ENCODE measurements at regions of chr2 and their contacts with region 1.

Region 1: DNA sequence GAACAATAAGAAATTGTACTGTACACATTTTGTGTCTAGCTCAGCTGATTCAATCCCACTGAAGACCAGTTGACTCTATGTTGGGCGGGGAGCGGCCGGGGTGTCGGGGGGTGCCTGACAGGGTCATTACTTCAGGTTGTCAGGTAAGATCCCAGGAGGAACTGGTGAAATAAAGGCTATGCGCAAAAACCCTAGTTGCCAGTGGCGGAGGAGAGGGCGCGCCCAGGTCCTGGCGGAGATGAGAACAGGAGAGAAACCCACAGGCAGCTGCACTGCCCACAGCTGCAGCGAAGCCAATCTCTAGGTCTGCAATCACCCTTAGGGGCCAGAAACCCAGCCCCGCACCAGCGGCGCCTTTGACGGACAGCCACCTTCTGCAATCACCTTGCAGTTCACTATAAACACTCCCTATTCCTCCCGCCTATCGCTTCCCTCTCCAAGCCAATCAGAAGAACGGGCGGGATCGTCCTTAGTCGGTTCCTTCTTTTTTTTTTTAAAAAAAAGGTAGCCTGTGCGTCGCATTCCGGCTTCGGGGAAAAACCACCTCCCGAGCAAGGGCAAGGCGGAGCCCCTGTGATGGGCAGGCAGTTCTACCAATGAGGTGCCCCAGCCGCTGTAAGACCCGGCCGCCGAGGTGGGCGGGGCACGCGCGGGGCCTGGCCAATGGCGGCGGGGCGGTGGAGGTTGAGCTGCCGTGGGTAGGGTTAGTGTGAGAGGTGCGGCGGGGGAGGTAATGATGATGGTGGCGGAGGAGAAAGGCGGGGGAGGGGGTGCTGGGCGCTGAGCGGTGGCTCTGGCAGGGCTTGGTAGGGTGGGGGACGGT is at the start of gene EHBP1:
- DNase-seq: peak; percentile 98
- H3K4me3 Mint-ChIP-seq: peak within 1 kb of the TSS; percentile 90
- H3K27ac Mint-ChIP-seq: peak within 1 kb of the TSS; percentile 76
- H3K4me1 Mint-ChIP-seq: peaks cover 27% of the 10 kb centered on the region
- H3K27me3 Mint-ChIP-seq: no peaks in the 10 kb centered on the region
- total RNA-seq, gene EHBP1: 17.4 to 17.5 TPM

Region 2: GRCh38 chr2:61470965-61471904 is 1234.0 kb before region 1 on chr2 and contains the start of gene USP34:
- CTCF ChIA-PET with region 1: no interaction called
- intact Hi-C with region 1: loop called (anchors 1 kb)
- DNase-seq: peak; percentile 94
- H3K4me3 Mint-ChIP-seq: peak within 1 kb of the TSS; percentile 98
- H3K27ac Mint-ChIP-seq: peak within 1 kb of the TSS; percentile 97
- H3K4me1 Mint-ChIP-seq: peaks cover 31% of the 10 kb centered on the region
- H3K27me3 Mint-ChIP-seq: no peaks in the 10 kb centered on the region
- total RNA-seq, gene USP34: 59.5 to 60.4 TPM

Region 3: GRCh38 chr2:61888267-61889055 is 816.8 kb before region 1 on chr2 and contains the start of gene CCT4:
- CTCF ChIA-PET with region 1: no interaction called
- intact Hi-C with region 1: loop called (anchors 1 kb)
- DNase-seq: peak; percentile 86
- H3K4me3 Mint-ChIP-seq: peak within 1 kb of the TSS; percentile 99
- H3K27ac Mint-ChIP-seq: peak within 1 kb of the TSS; percentile 98
- H3K4me1 Mint-ChIP-seq: peaks cover 34% of the 10 kb centered on the region
- H3K27me3 Mint-ChIP-seq: no peaks in the 10 kb centered on the region
- total RNA-seq, gene CCT4: 363 to 377 TPM

Region 4: GRCh38 chr2:62038975-62039771 is 666.0 kb before region 1 on chr2:
- CTCF ChIA-PET with region 1: no interaction called
- intact Hi-C with region 1: loop called (anchors 1 kb)
- DNase-seq: peak; percentile 58
- H3K4me3 Mint-ChIP-seq: no peak overlapping the region
- H3K27ac Mint-ChIP-seq: no peak overlapping the region
- H3K4me1 Mint-ChIP-seq: peaks cover 17% of the 10 kb centered on the region
- H3K27me3 Mint-ChIP-seq: no peaks in the 10 kb centered on the region

Region 5: GRCh38 chr2:62202019-62202722 is 503.0 kb before region 1 on chr2:
- CTCF ChIA-PET with region 1: no interaction called
- intact Hi-C with region 1: loop called (anchors 1 kb)
- DNase-seq: peak; percentile 35
- H3K4me3 Mint-ChIP-seq: peak overlapping the region; percentile 17
- H3K27ac Mint-ChIP-seq: peak overlapping the region; percentile 97
- H3K4me1 Mint-ChIP-seq: peaks cover 79% of the 10 kb centered on the region
- H3K27me3 Mint-ChIP-seq: no peaks in the 10 kb centered on the region

Region 6: DNA sequence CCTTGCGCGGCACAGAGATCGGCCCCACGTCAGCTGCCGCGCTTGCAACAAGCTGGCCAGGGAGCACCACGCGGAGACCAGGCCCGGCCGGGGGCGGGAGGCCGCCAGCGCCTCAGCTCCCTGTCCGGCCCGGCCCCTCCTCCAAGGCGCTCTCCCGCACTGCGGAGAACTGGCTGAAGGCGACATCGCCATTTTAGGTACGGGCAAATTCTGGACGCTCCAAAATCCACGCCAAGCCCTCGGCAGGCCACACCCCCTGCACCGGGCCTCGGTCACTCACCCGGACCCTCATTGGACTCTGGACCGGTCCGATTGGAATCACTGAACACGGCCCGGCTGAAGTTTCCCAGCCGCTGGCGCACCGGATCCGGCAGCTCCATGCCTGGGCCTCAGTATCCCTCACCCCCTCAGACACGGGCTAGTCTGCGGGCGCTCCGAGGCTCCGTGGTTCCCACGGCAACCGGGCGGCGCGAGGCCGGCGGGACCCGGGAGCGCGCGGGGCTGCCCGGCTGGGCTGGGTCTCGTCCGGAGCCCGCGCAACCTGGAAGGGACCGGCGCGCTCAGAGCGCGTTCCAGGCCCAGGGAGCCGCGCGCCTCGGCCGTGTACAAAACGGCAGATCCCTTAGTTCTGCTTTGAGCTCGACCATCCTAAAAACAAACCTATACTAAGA is 199.3 kb before region 1 on chr2 and contains the start of gene TMEM17:
- CTCF ChIA-PET with region 1: no interaction called
- intact Hi-C with region 1: loop called (anchors 5 kb)
- DNase-seq: peak; percentile 29
- H3K4me3 Mint-ChIP-seq: peak within 1 kb of the TSS; percentile 72
- H3K27ac Mint-ChIP-seq: no peak within 1 kb of the TSS
- H3K4me1 Mint-ChIP-seq: peaks cover 7% of the 10 kb centered on the region
- H3K27me3 Mint-ChIP-seq: peaks cover 24% of the 10 kb centered on the region
- total RNA-seq, gene TMEM17: 0.21 TPM in 1 of 2 experiments, not detected in the other

Region 7: DNA sequence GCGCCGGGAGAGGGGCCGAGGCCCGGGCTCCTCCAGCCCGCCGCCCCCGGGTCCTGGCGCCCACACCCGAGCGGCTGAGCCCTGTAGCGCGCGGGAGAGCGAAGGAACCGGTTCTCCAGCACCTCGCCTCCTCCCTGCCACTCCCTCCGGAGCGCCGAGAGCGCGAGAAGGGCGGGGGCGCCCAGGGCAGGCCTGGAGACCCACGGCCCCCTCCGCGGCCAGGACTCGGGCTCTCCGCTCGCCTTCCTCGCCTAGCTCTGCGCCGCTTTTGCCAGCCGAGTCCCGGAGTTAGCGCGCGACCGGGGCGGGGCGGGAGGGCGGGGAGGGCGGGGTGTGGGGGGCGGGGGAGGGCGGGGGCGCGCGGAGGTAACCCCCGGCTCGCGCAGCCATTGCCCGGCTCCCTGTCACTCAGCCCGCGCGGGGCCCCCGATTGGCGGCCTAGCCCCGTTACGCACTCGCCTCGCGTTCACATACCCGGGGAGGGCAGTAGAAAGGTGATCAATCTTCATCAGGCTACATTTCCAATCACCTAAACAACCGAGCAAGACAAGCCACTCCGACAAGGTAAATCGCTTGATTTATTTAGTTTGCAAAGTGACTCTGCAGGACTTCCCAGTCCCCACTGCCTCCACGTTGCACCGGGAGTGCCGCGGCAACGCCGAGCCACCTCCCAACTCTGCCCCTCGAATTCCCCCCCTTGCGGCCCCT is 345.3 kb after region 1 on chr2 and contains the start of gene OTX1:
- CTCF ChIA-PET with region 1: no interaction called
- intact Hi-C with region 1: loop called (anchors 2 kb)
- DNase-seq: peak; percentile 55
- H3K4me3 Mint-ChIP-seq: peak within 1 kb of the TSS; percentile 80
- H3K27ac Mint-ChIP-seq: no peak within 1 kb of the TSS
- H3K4me1 Mint-ChIP-seq: peaks cover 61% of the 10 kb centered on the region
- H3K27me3 Mint-ChIP-seq: peaks cover 79% of the 10 kb centered on the region
- total RNA-seq, gene OTX1: not detected